Upper lobe of right lung (tissue), 1 donor: ENCODE measurements at regions of chr17 and their contacts with region 1.

Region 1: DNA sequence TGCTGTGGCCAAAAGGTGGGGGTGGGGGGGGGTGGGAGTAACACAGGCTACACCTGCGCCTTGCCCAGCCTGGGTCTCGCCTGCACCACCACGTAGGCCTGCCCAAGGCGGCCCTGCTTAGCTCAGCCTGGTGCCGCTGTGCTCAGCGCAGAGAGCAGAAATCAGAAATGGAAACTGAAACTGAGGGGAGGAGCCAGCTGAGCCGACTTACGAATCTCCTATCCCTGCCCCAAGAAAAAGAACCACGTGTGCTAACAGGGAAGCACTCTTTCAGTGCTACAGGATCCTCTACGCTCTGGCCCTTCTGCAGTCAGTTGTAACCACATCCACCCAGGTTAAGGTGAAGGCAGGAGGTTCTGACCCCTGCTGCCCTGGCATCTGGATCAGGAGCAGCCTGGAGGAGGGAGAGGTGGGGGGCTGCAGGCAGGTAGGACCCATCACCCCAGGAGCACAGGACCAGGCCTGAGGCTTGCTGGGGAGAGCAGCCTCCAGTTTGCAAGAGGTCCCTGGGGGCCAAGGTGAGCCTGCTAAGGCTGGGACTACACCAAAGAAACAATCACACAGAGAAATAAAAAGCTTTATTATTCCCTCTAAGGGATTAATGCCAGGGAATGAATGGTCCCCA is at the start of gene DHX58:
- DNase-seq: peak; percentile 80
- ATAC-seq: peak; percentile 89
- H3K4me3 ChIP-seq: peak within 1 kb of the TSS; percentile 75
- H3K27ac ChIP-seq: peak within 1 kb of the TSS; percentile 92
- H3K4me1 ChIP-seq: peaks cover 19% of the 10 kb centered on the region
- H3K27me3 ChIP-seq: no peaks in the 10 kb centered on the region
- CTCF ChIP-seq: no peak
- total RNA-seq, gene DHX58: 27.5 TPM

Region 2: DNA sequence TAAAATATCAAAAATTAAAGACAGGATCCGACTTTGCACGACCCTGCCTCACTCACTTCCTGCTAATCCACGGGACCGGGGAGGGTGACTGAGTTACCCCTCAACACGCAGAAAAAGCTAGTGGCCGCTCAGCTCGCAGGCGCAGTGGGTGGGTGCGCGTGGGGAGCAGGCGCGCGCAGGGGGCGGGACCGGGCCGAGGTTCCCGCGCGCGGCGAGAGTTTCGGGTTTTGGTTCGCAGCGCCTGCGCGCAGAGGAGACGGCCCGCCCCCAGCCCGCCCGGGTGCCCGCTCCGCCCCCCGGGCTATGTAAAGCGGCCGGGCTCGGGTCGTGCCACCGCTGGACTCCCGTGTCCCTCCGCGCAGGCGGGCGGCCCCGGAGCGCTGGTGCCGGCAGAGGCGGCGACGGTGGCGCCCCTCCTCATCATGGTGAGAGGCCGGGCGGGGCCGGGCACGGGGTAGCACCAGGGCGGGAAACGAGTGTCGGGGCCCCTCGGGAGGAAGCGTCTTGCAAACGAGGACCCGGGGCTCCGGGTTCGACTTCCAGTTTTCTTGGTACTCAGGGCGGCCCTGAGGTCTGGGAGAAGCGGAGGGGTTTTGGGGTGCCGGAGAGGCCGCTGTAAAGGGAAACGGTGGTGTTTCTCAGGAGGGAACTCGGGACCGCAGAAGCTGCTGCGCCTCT is 146.1 kb before region 1 on chr17 and contains the start of gene CNP:
- intact Hi-C with region 1: loop called (anchors 10 kb)
- DNase-seq: peak; percentile 96
- ATAC-seq: peak; percentile 94
- H3K4me3 ChIP-seq: peak within 1 kb of the TSS; percentile 94
- H3K27ac ChIP-seq: peak within 1 kb of the TSS; percentile 92
- H3K4me1 ChIP-seq: peaks cover 16% of the 10 kb centered on the region
- H3K27me3 ChIP-seq: no peaks in the 10 kb centered on the region
- CTCF ChIP-seq: no peak
- total RNA-seq, gene CNP: 51.1 TPM

Region 3: GRCh38 chr17:42019509-42020404 is 92.9 kb before region 1 on chr17 and contains the start of gene NKIRAS2:
- intact Hi-C with region 1: loop called (anchors 10 kb)
- DNase-seq: peak; percentile 98
- ATAC-seq: peak; percentile 88
- H3K4me3 ChIP-seq: peak within 1 kb of the TSS; percentile 97
- H3K27ac ChIP-seq: peak within 1 kb of the TSS; percentile 86
- H3K4me1 ChIP-seq: peaks cover 48% of the 10 kb centered on the region
- H3K27me3 ChIP-seq: no peaks in the 10 kb centered on the region
- CTCF ChIP-seq: peak; percentile 95
- total RNA-seq, gene NKIRAS2: 28.8 TPM

Region 4: GRCh38 chr17:42050393-42051012 is 62.2 kb before region 1 on chr17 and contains the start of gene C17orf113:
- intact Hi-C with region 1: no loop called
- DNase-seq: peak; percentile 81
- ATAC-seq: peak; percentile 88
- H3K4me3 ChIP-seq: peak within 1 kb of the TSS; percentile 67
- H3K27ac ChIP-seq: peak within 1 kb of the TSS; percentile 60
- H3K4me1 ChIP-seq: peaks cover 11% of the 10 kb centered on the region
- H3K27me3 ChIP-seq: peaks cover 9% of the 10 kb centered on the region
- CTCF ChIP-seq: peak; percentile 37
- total RNA-seq, gene C17orf113: 0.72 TPM